Heart left ventricle (tissue), 16 donors: ENCODE measurements at regions of chr18 and their contacts with region 1.

Region 1: GRCh38 chr18:6885992-6886796 is 156.7 kb downstream of the ARHGAP28 start:
- DNase-seq: peak in 2 of 5 donors; percentile 42 to 44
- ATAC-seq: peak in 3 of 4 donors; percentile 57 to 79 (median 74)
- H3K4me3 ChIP-seq: no peak overlapping the region
- H3K27ac ChIP-seq: no peak overlapping the region
- H3K4me1 ChIP-seq: peaks cover 0 to under 1% (median 0%) of the 10 kb centered on the region in 12 donors
- H3K27me3 ChIP-seq: no peaks in the 10 kb centered on the region
- CTCF ChIP-seq: peak; percentile 47 to 87 (median 77)
- POLR2A ChIP-seq: no peak

Region 2: DNA sequence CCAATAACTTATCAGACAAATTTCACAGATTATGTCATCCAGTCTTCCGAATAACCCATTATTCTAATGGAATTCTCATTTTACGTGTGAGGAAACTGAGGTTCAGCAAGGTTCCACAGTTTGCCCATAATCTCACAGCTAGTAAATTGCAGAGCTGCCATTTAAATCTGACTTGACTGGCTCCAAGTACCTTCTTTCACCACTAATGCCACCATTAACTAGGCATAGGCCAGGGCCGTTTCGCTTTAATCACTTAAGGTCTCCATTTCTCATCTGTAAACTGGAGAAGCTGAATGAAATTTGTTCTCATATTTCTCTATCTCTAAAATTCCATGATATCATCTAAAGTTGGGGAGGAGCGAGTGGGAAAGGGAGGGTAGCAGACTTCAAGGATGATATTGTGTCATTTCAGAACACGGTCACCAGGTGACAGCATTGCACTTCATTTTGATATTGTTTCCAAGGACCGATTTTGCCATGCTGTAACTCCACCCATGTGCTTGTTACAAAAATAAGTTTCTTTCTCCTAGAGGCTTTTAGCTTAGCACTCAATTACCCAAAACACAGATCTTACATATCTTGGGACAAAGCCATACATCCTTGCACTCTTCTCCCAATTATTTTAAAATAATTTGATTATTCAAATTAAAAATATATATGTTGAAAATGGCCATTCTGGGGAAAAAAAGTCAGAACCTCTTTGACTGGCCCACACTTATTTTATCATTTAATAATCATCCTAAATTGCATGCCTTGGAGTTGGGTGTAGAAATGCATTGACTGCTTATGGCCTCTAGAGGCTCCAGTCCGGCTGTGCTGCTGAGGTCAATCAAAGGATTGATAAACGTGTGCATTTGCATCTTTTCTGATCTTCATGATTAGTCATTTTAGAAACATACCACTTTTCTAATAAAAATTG is 1812.9 kb before region 1 on chr18:
- intact Hi-C with region 1: loop called in 1 of 10 experiments (anchors 10 kb)
- DNase-seq: peak in 1 of 5 donors; percentile 9
- ATAC-seq: peak in 3 of 4 donors; percentile 56 to 83 (median 72)
- H3K4me3 ChIP-seq: no peak overlapping the region
- H3K27ac ChIP-seq: no peak overlapping the region
- H3K4me1 ChIP-seq: no peaks in the 10 kb centered on the region
- H3K27me3 ChIP-seq: peaks cover 0 to 3% (median 0%) of the 10 kb centered on the region in 9 donors
- CTCF ChIP-seq: peak in 11 of 12 donors; percentile 26 to 70 (median 51)
- POLR2A ChIP-seq: no peak

Region 3: DNA sequence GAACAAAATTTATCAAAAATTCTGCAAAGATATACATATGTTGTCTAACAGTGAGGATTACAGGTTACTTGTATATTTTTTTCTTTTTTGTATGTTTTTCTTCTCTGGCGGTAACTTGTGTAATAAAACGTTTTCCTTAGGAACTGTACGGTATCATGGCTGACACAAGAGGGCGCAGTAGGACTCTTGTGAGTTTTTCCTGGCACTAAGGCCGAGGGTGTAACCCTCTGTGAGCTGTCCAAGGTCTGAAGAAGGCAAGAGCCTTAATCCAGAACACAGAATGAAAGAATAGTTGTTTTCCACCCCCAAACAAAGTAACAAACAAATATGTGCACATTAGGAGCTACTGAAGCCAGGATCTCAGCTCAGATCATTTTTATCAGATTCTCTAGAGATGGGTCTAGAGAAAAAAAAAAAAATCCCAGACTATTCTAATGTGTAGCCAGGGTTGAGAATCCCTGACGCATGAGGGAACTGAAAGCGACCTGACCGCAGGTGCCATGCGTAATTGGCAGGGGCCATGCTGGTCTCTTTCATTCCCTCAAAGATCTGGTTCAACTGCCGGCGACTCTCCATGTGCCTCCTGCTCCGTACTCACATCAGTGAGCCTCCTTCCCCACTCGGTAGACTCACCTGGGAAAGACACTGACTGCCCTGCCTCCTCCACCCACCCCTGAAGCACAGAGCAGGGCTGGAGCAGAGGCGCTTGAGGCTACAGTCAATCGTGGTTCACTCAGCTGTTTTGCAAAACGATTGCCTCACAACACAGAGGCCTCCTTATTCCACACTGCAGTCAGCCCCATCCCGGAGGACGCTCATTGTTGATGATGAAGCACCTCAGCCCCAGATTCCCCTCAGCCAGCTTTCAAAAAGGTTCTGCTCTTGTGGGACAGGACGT is 1017.7 kb before region 1 on chr18:
- intact Hi-C with region 1: loop called in 2 of 10 experiments (anchors 5 to 10 kb)
- DNase-seq: peak in 4 of 5 donors; percentile 55 to 65 (median 58)
- ATAC-seq: peak; percentile 61 to 93 (median 88)
- H3K4me3 ChIP-seq: no peak overlapping the region
- H3K27ac ChIP-seq: no peak overlapping the region
- H3K4me1 ChIP-seq: no peaks in the 10 kb centered on the region
- H3K27me3 ChIP-seq: peaks cover 0 to 20% (median 0%) of the 10 kb centered on the region in 9 donors
- CTCF ChIP-seq: peak; percentile 58 to 82 (median 76)
- POLR2A ChIP-seq: no peak

Region 4: GRCh38 chr18:6543330-6543908 is 342.8 kb before region 1 on chr18:
- intact Hi-C with region 1: loop called (anchors 1 to 2 kb)
- DNase-seq: no peak
- ATAC-seq: no peak
- H3K4me3 ChIP-seq: no peak overlapping the region
- H3K27ac ChIP-seq: no peak overlapping the region
- H3K4me1 ChIP-seq: no peaks in the 10 kb centered on the region
- H3K27me3 ChIP-seq: no peaks in the 10 kb centered on the region
- CTCF ChIP-seq: peak; percentile 34 to 75 (median 60)
- POLR2A ChIP-seq: no peak

Region 5: DNA sequence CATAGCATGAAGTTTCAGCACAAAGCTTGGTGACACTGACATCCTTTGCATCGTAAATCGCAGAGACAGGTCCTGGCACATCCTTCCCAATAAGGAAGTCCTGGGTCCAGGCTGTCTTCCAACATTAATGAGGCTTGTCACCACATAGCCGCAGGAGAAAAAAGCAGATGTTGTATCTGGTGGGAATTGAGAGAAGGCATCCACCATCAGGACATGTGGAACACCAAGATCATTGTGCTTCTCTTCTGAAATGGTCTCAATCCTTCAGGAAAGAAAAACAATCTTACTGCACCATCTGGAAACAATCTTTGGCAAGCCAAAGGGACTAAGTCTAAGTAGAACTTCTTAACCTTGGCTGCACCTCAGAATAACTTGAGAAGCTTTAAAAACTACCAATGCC is 275.7 kb before region 1 on chr18:
- intact Hi-C with region 1: loop called in 1 of 10 experiments (anchors 10 kb)
- DNase-seq: no peak
- ATAC-seq: peak in 1 of 4 donors; percentile 51
- H3K4me3 ChIP-seq: no peak overlapping the region
- H3K27ac ChIP-seq: no peak overlapping the region
- H3K4me1 ChIP-seq: peaks cover 0 to 6% (median 0%) of the 10 kb centered on the region in 12 donors
- H3K27me3 ChIP-seq: no peaks in the 10 kb centered on the region
- CTCF ChIP-seq: no peak
- POLR2A ChIP-seq: no peak

Region 6: DNA sequence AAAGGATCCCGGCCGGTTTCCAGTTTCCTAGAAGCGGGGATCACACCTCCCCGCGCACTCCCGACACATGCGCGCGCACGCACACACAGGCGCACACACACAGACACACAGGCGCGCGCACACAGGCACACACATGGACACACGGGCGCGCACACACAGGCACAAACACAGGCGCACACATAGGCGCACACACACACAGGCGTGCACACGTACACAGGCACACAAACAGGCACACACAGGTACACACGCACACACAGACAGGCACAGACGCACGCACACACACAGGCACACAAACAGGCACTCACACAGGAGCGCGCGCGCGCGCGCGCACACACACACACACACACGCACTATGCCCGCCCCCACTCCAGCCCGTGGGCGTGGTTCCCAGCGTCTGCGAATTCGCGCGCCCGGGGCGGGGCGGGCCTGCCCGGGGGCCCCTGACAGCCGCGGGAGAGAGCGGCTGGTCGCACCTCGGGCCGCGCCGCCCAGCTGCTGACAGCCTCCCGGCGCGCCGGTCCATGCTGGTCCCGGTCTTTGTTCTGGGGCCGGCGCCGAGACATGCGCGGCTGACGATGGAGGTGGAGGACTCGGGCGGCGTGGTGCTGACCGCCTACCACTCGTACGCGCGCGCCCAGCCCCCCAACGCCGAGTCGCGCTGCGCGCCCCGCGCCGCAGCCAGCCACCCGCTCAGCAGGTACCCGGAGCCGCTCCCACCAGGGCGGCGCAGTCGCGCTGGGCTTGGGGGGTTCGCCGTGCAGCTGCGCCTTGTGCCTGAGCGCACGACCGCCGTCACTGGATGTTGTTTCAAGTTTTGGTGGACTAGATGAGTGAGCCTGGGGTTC is 156.7 kb before region 1 on chr18 and contains the start of gene ARHGAP28:
- intact Hi-C with region 1: loop called in 6 of 10 experiments (anchors 5 to 10 kb)
- DNase-seq: peak; percentile 80 to 95 (median 87)
- ATAC-seq: peak; percentile 94 to 97 (median 96)
- H3K4me3 ChIP-seq: peak within 1 kb of the TSS; percentile 54 to 91 (median 70)
- H3K27ac ChIP-seq: peak within 1 kb of the TSS; percentile 58 to 88 (median 84)
- H3K4me1 ChIP-seq: peaks cover 0 to 17% (median 5%) of the 10 kb centered on the region in 12 donors
- H3K27me3 ChIP-seq: no peaks in the 10 kb centered on the region
- CTCF ChIP-seq: peak in 10 of 12 donors; percentile 15 to 59 (median 41)
- POLR2A ChIP-seq: peak in 1 of 2 donors; percentile 39
- total RNA-seq, gene ARHGAP28: 0.42 to 7.5 (median 1.8) TPM

Region 7: GRCh38 chr18:6741232-6741663 is 144.9 kb before region 1 on chr18:
- intact Hi-C with region 1: loop called in 1 of 10 experiments (anchors 10 kb)
- DNase-seq: peak in 4 of 5 donors; percentile 25 to 42 (median 38)
- ATAC-seq: peak in 3 of 4 donors; percentile 90 to 97 (median 95)
- H3K4me3 ChIP-seq: no peak overlapping the region
- H3K27ac ChIP-seq: peak overlapping the region in 5 of 12 donors; percentile 13 to 70 (median 39)
- H3K4me1 ChIP-seq: peaks cover 0 to 13% (median 3%) of the 10 kb centered on the region in 12 donors
- H3K27me3 ChIP-seq: no peaks in the 10 kb centered on the region
- CTCF ChIP-seq: no peak
- POLR2A ChIP-seq: no peak